Activated T-helper 1 cell treated with anti-CD3 and anti-CD28 coated beads, Interleukin-12 subunit alpha, Interleukin-12 subunit beta, Interleukin-2, Interleukin-4 antibody, amounts not matched to agents 30 ng/mL and 10 ng/mL and 1 ng/mL, durations not matched to agents 14 hours and 24 hours and 36 hours (primary cell): ENCODE measurements at regions of chr5 and their contacts with region 1.

Region 1: GRCh38 chr5:160008877-160009590 is at the start of gene TTC1:
- DNase-seq: peak; percentile 90
- H3K4me3 Mint-ChIP-seq: peak within 1 kb of the TSS; percentile 91
- H3K27ac Mint-ChIP-seq: peak within 1 kb of the TSS; percentile 91
- H3K4me1 Mint-ChIP-seq: peaks cover 29% of the 10 kb centered on the region
- H3K27me3 Mint-ChIP-seq: peaks cover 4% of the 10 kb centered on the region
- total RNA-seq, gene TTC1: 65.9 and 69.1 TPM in 2 replicates

Region 2: DNA sequence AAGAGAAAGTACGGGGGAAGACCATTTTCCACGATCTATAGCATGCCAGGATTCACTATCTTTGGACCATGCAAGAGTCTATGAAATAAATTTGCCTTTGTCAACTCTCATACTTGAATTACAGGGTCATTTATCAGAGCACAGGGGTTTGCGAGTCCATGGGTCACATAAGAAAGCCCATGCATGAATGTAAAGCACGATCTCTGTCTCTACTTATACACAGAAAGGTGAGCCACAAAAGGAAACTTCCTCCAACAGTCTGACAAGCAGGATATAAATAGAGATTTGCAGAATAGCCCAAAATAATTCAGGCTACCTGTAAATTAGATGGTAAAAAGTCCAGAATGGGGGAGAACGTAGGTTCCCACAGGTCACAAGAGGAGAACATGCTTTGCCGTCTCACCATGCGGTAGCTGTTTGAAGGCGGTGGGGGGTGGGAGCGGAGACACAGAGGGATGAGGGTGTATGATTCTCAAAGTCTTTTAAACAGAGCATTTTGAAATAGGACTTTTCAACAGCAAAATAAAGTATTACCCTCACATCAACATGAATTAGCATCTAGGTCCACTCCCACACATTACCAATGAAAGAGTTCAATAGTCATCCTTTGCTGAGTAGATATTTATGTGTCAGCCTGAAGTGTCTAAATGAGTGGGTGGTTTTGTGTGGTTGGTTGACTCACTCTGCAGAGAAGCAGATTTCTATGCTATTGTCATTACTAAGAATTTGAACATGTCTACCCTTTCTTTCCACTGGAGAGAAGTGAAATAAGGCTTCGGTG is 1189.0 kb before region 1 on chr5:
- intact Hi-C with region 1: loop called (anchors 2 kb)
- DNase-seq: no peak
- H3K4me3 Mint-ChIP-seq: no peak overlapping the region
- H3K27ac Mint-ChIP-seq: peak overlapping the region; percentile 80
- H3K4me1 Mint-ChIP-seq: peaks cover 55% of the 10 kb centered on the region
- H3K27me3 Mint-ChIP-seq: no peaks in the 10 kb centered on the region

Region 3: DNA sequence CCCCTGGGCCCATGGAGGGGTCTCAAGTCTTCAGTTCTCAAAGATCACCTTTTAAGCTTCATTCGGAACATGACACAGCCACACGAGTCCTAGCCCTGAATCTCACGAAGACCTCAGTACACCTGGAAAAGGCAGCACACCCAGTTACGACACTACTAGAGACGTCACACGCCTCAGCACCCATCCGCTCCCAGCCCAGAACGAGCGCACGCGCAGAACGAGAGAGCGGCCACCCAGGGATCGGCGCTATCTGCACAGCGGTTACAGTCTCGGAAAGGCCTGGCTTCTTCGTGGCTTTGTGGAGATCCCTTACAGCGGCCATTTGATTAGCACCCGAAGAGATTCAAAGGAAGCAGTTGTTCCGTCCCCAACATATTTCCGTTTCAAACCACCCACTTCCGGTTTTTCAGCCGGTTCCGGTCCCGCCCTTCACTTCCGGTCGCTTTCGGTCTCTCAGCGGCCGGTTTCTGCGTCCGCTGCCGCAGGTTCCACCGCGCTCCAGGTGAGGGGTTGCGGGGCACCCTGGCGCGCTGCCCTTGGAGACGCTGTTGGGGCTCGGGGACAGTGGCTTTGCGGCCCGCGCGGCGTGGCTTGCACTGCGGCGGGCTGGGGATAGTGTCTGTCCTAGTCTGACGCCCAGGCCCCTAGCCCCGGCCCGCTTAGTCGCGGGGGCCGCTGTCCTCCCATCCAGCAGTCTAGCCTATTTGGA is 746.0 kb before region 1 on chr5 and contains the start of gene UBLCP1:
- intact Hi-C with region 1: loop called (anchors 1 kb)
- DNase-seq: peak; percentile 71
- H3K4me3 Mint-ChIP-seq: peak within 1 kb of the TSS; percentile 96
- H3K27ac Mint-ChIP-seq: peak within 1 kb of the TSS; percentile 98
- H3K4me1 Mint-ChIP-seq: peaks cover 21% of the 10 kb centered on the region
- H3K27me3 Mint-ChIP-seq: peaks cover 2% of the 10 kb centered on the region
- total RNA-seq, gene UBLCP1: 30.8 and 32.3 TPM in 2 replicates

Region 4: GRCh38 chr5:159773062-159773924 is 235.7 kb before region 1 on chr5:
- intact Hi-C with region 1: loop called (anchors 1 kb)
- DNase-seq: peak; percentile 79
- H3K4me3 Mint-ChIP-seq: peak overlapping the region; percentile 49
- H3K27ac Mint-ChIP-seq: peak overlapping the region; percentile 44
- H3K4me1 Mint-ChIP-seq: peaks cover 33% of the 10 kb centered on the region
- H3K27me3 Mint-ChIP-seq: peaks cover 29% of the 10 kb centered on the region

Region 5: DNA sequence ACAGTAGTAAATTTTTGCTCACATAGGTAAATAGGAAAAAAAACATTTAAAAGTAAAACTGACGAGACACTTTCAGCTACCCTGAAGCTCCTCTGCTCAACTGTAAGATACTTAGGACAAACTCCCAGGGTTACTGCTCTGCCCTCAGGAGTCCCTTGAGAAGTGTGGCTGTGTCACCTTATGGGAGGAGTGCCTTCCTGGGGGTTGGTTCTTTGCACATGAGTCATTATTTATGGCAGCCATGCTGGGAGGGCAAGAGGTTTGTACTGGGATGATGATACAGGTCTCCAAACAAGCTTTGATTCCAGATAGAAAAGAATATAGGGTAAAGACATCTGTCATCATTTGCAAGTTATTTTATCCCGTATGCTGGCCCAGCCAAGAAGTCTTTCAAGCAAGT is 45.8 kb after region 1 on chr5:
- intact Hi-C with region 1: no loop called
- DNase-seq: no peak
- H3K4me3 Mint-ChIP-seq: no peak overlapping the region
- H3K27ac Mint-ChIP-seq: no peak overlapping the region
- H3K4me1 Mint-ChIP-seq: no peaks in the 10 kb centered on the region
- H3K27me3 Mint-ChIP-seq: no peaks in the 10 kb centered on the region

Region 6: DNA sequence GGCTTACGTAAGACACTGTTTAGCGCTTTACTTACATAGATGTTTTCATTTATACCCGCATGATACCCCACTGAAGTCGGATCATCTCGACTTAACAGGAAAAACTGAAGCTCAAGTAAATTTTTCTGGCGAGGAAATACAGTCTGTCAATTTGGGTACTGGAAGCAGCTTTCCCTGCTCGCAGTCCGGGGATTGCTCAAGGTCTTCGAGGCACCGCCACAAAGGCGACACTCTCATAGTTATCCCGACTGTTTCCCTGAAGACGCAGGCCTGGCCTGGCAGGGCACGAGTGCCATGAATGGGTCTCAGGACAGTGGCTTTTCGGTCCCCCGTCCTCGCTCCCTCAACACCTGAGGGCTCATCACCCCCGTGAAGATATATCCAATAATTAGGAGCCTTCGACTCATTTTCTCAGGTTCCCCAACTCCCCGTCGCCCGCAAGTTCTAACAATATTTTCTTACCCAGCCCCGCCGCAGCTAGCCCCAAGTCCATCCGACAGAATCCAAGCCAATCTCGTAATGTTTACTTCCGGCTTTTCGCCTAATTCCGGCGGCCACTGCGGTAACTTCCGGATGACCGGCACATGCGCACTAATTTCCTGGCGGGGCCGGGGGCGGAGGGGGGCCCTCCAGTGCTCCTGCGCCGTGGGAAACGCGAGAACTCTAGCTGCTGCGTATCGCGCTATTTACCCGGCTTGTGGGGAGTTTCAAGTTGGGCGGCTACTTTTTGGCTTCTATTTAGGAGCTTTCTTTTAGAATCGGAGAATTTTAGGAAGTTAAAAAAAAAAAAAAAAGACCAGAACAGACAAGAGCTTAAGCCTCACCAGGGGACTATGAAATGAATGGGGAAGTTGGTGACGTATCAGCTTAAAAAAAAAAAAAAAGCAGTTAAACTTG is 409.8 kb after region 1 on chr5 and contains the start of gene SLU7:
- intact Hi-C with region 1: loop called (anchors 1 kb)
- DNase-seq: peak; percentile 91
- H3K4me3 Mint-ChIP-seq: peak within 1 kb of the TSS; percentile 94
- H3K27ac Mint-ChIP-seq: peak within 1 kb of the TSS; percentile 95
- H3K4me1 Mint-ChIP-seq: peaks cover 77% of the 10 kb centered on the region
- H3K27me3 Mint-ChIP-seq: no peaks in the 10 kb centered on the region
- total RNA-seq, gene SLU7: 37.4 and 47.4 TPM in 2 replicates